ENCODE measurements at regions of chr6 and their contacts with region 1.

Region 1: GRCh38 chr6:25992413-25993037 is 29.9 kb downstream of the TRIM38 start:
- DNase-seq: peak; percentile 99
- ATAC-seq: peak; percentile 89
- H3K4me3 Mint-ChIP-seq: peak overlapping the region; percentile 99
- H3K27ac Mint-ChIP-seq: peak overlapping the region; percentile 99
- H3K4me1 Mint-ChIP-seq: peaks cover 50% of the 10 kb centered on the region
- H3K27me3 Mint-ChIP-seq: no peaks in the 10 kb centered on the region
- CTCF ChIP-seq: peak; percentile 73

Region 2: GRCh38 chr6:25556516-25556915 is 436.0 kb before region 1 on chr6:
- CTCF ChIA-PET with region 1: no interaction called
- POLR2A ChIA-PET with region 1: no interaction called
- intact Hi-C with region 1: loop called (anchors 2 kb)
- DNase-seq: peak; percentile 47
- ATAC-seq: peak; percentile 47
- H3K4me3 Mint-ChIP-seq: no peak overlapping the region
- H3K27ac Mint-ChIP-seq: no peak overlapping the region
- H3K4me1 Mint-ChIP-seq: peaks cover 9% of the 10 kb centered on the region
- H3K27me3 Mint-ChIP-seq: no peaks in the 10 kb centered on the region
- CTCF ChIP-seq: peak; percentile 90

Region 3: DNA sequence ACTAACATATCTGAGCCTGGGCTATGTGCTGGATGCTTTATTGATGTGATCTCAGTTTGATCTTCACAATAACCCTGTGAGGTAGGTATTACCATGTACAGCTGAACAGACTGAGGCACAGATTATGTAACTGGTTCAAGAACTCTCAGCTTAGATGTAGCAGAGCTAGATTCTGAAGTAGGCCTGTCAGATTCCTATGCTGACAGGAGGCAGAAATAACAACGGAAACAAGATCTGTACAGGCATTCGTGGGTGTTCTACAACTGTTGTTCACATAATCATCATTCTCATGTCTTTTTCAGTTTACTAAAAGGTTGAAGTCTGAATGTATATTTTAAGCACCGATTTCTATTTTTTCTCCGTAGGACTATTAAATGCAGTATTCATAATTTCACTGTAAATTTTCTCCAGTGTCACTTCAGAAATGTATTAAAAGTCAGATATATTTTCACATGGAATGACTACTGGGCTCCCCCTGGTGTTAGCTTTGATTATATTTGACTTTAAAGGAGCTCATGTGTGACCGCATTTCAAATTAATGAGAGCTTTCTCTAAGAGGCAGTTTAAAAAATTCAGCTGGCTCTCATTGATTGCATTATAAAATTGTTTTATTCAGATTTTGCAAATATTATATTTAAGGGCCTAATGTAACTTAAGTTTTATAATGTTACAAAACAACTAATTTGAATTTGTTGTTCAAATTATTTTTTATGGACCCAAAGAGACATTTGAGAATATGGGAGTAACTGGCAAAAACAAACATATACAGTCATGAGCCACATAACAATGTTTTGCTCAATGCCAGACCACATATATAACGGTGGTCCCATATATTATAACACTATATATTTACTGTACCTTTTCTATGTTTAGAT is 274.4 kb before region 1 on chr6:
- CTCF ChIA-PET with region 1: interaction called, 10 read pairs
- POLR2A ChIA-PET with region 1: interaction called, 4 read pairs
- intact Hi-C with region 1: loop called (anchors 2 kb)
- DNase-seq: no peak
- ATAC-seq: no peak
- H3K4me3 Mint-ChIP-seq: no peak overlapping the region
- H3K27ac Mint-ChIP-seq: no peak overlapping the region
- H3K4me1 Mint-ChIP-seq: no peaks in the 10 kb centered on the region
- H3K27me3 Mint-ChIP-seq: peaks cover 15% of the 10 kb centered on the region
- CTCF ChIP-seq: no peak

Region 4: GRCh38 chr6:25962149-25963127 is 30.1 kb before region 1 on chr6 and contains the start of gene TRIM38:
- CTCF ChIA-PET with region 1: interaction called, 21 read pairs
- POLR2A ChIA-PET with region 1: interaction called, 58 read pairs
- intact Hi-C with region 1: loop called (anchors 1 kb)
- DNase-seq: peak; percentile 30
- ATAC-seq: peak; percentile 82
- H3K4me3 Mint-ChIP-seq: peak within 1 kb of the TSS; percentile 94
- H3K27ac Mint-ChIP-seq: peak within 1 kb of the TSS; percentile 95
- H3K4me1 Mint-ChIP-seq: peaks cover 87% of the 10 kb centered on the region
- H3K27me3 Mint-ChIP-seq: no peaks in the 10 kb centered on the region
- CTCF ChIP-seq: no peak
- total RNA-seq, gene TRIM38: 31.7 and 36.8 TPM in 2 replicates

Region 5: DNA sequence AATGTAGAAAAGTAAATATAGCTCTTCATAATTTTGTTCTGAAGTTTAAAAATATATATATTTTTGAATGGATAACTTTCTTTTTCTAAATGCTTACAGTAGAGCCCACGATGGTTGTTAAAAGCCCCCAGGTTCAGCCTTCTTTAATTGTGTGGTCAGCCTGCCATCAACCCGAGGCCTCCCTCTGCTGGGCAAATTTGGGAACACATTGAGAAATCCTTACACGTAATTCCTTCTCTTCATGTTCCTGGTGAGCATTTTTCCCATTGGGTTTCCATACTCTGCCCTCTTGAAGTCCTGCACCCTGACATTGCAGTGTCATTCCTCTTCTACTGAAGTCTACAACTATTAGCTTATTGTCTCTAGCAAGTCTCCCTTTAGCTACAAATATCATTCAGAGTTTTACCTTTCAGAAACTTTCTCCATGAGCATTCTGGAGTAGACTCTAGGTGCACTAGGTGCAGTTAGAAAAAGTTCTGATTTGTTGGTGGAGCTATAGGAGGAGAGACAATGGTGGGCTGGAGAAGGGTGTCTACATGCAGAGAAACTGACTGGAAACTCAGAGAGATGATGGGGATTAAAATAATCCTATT is 10.7 kb after region 1 on chr6:
- CTCF ChIA-PET with region 1: interaction called, 36 read pairs
- POLR2A ChIA-PET with region 1: interaction called, 12 read pairs
- intact Hi-C with region 1: loop called (anchors 1 kb)
- DNase-seq: no peak
- ATAC-seq: peak; percentile 49
- H3K4me3 Mint-ChIP-seq: no peak overlapping the region
- H3K27ac Mint-ChIP-seq: no peak overlapping the region
- H3K4me1 Mint-ChIP-seq: no peaks in the 10 kb centered on the region
- H3K27me3 Mint-ChIP-seq: no peaks in the 10 kb centered on the region
- CTCF ChIP-seq: peak; percentile 39

Region 6: GRCh38 chr6:26031595-26032339 is 39.2 kb after region 1 on chr6:
- CTCF ChIA-PET with region 1: interaction called, 12 read pairs
- POLR2A ChIA-PET with region 1: interaction called, 65 read pairs
- intact Hi-C with region 1: no loop called
- DNase-seq: peak; percentile 55
- ATAC-seq: peak; percentile 62
- H3K4me3 Mint-ChIP-seq: peak overlapping the region; percentile 93
- H3K27ac Mint-ChIP-seq: peak overlapping the region; percentile 98
- H3K4me1 Mint-ChIP-seq: peaks cover 40% of the 10 kb centered on the region
- H3K27me3 Mint-ChIP-seq: peaks cover 2% of the 10 kb centered on the region
- CTCF ChIP-seq: no peak

Region 7: DNA sequence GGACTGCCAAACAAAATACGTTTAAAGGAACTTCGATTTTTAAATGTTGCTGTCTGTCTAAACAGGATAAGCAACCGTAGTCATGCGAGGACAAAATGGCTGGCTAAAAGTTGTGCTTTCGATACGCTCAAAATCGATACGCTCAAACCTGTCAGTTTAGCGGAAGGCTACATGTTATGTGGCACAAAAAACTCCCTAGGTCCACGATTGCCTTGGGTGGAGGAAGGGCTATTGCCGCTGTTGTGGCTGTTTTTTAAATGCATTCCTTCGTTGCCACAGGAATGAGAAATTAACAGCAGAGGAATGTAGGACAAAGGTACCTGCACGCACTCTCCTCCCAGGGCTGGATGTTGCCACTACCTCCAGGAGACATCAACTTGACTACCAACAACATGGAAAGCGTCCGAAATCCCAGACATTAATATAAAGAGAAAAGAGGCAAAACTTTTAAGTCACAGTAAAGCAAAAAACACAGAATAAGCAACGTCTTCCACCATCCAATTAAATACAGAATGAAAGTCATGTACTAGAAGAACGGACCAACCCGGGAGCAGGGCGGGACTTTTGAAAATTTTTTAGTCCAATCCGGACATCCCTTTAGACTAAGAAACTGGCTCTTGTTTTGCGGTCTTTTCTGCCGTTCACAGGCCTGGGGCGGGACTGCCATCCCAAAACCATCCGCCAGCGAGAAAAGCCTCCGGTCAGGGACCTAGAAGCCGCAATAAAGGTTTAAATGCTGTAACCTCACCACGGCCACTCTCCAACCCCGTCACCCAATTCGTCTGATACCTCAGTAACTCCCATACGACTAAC is 62.5 kb after region 1 on chr6:
- CTCF ChIA-PET with region 1: no interaction called
- POLR2A ChIA-PET with region 1: interaction called, 14 read pairs
- intact Hi-C with region 1: loop called (anchors 1 kb)
- DNase-seq: peak; percentile 63
- ATAC-seq: peak; percentile 65
- H3K4me3 Mint-ChIP-seq: peak overlapping the region; percentile 97
- H3K27ac Mint-ChIP-seq: peak overlapping the region; percentile 100
- H3K4me1 Mint-ChIP-seq: peaks cover 20% of the 10 kb centered on the region
- H3K27me3 Mint-ChIP-seq: no peaks in the 10 kb centered on the region
- CTCF ChIP-seq: no peak